Panc1 (cell line): ENCODE measurements at regions of chr4 and their contacts with region 1.

Region 1: GRCh38 chr4:183300070-183300469 is 20.0 kb downstream of the CLDN22 start:
- DNase-seq: no peak
- ATAC-seq: no peak
- H3K4me3 ChIP-seq: no peak overlapping the region
- H3K27ac ChIP-seq: no peak overlapping the region
- H3K4me1 ChIP-seq: no peaks in the 10 kb centered on the region
- H3K27me3 ChIP-seq: no peaks in the 10 kb centered on the region
- CTCF ChIP-seq: no peak

Region 2: DNA sequence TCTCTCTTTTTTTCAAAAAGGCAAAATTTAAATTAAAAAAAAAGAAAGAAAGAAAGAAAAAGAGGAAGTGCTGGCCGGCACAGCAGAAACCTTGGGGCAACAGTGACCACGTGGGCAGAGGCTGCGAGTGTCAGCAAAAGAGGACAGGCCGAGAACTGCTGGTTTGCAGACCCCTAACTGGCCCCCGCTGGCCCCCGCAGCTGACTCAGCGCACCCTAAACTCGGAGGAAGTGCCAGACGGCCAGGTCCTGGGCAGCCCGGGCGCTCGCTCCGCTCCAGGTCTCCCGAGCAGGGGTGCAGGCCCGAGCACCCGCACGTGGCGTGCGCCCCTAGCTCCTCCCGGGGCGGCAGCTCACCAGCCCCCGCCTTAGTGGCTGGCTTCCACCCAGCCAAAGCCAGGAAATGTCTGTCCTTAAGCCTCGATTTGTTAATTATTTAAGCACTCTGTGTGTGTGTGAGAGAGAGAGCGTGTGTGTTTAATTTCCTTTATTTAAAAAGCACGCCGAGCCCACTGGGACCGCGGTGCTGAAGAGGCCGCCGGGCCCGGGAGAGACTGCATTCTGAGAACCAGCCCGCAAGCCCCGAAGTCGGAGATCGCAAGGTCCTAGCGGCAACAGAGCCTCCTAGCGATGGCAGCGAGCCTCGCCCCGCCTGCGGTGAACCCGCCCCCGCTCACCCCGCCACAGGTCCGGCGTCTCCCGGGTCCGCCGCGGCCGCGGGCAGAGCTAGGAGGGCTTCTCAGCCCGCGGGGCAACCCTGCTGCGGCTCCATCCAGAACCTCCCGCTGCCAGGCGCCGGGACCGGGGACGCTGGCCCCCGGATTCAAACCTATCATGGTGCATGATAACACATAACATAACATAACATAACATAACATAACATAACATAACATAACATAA is 98.4 kb after region 1 on chr4:
- CTCF ChIA-PET with region 1: no interaction called
- POLR2A ChIA-PET with region 1: no interaction called
- in situ Hi-C with region 1: no loop called
- intact Hi-C with region 1: loop called (anchors 10 kb)
- DNase-seq: no peak
- ATAC-seq: peak; percentile 96
- H3K4me3 ChIP-seq: peak overlapping the region; percentile 39 to 57
- H3K27ac ChIP-seq: peak overlapping the region; percentile 61
- H3K4me1 ChIP-seq: no peaks in the 10 kb centered on the region; the same call in none of the 2 replicates
- H3K27me3 ChIP-seq: no peaks in the 10 kb centered on the region
- CTCF ChIP-seq: peak; percentile 80